ENCODE measurements at regions of chr9 and their contacts with region 1.

Region 1: DNA sequence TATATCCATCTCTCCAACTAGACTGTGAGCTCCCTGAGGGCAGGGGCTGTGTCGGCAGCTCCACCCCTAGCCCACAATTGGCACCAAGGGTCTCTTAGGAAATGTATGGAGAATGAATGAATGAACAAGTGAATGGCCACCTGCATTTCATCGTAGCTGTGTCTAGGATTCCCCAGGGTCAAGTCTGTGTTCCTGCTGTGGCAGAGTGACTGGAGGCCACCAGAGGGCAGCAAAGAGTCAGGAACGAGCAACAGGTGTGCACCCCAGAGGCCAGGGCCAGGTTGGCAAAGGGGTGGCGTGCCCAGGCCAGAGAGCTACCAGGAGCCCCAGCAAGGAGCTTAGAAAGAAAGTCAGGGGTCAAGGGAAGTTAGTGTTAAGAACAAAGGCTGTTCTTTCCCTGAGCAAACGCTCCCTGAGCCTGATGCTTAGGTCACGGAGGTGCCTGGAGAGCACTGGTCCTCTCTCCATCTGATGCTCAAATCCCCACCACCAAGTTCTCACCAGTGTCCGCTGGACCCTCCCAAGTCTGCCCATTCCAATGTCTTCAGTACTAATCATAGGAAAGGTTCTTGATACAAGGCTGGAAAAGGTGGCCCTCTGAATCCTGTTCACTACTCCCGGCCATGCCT is 160.7 kb downstream of the PAX5 start:
- DNase-seq: peak; percentile 79
- H3K4me3 ChIP-seq: no peak overlapping the region
- H3K27ac ChIP-seq: no peak overlapping the region
- H3K4me1 ChIP-seq: peaks cover 37% of the 10 kb centered on the region
- CTCF ChIP-seq: peak; percentile 95

Region 2: DNA sequence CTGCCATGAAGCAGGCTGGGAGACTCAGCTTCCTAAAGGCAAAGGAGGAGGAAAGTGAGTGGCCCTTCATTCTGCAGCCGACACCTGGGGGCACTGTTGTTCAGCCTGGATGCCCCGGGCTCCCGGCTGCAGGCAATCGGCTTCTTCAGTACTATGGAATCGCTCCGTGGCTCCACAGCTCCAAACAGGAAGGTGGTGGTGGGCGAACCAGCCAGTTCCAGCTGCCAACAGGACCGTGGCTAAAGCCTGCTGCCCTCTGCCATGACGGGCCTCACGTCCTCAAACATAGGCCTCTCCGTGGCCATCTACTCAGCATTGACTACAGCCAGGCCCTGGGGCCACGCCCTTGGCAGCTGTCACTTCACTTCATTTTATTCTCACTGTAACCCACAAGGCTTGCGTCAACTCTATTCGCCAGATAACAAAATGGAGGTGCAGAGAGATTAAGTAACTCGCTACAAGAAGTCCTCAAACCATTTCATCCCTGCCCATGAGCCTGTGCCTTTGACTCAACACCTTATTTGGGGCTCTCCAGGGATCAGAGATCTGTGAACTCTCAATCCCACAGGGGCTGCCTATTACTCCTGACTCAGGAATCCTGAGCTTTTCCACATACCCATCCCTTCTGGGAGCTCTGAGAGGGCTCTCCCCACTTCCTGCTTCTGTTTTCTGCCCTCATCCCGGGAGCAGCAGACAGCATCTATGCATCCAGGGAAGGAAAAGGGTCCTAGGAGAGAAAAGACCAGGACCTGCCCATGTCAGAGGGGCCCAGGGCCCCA is 122.8 kb after region 1 on chr9:
- CTCF ChIA-PET with region 1: interaction called, 4 read pairs
- POLR2A ChIA-PET with region 1: interaction called, 4 read pairs
- intact Hi-C with region 1: loop called (anchors 1 kb)
- DNase-seq: peak; percentile 57
- H3K4me3 ChIP-seq: peak overlapping the region; percentile 17
- H3K27ac ChIP-seq: peak overlapping the region; percentile 64
- H3K4me1 ChIP-seq: peaks cover 87% of the 10 kb centered on the region
- CTCF ChIP-seq: peak; percentile 84

Region 3: GRCh38 chr9:37187713-37188439 is 314.5 kb after region 1 on chr9:
- CTCF ChIA-PET with region 1: no interaction called
- POLR2A ChIA-PET with region 1: no interaction called
- intact Hi-C with region 1: loop called (anchors 5 kb)
- DNase-seq: peak; percentile 76
- H3K4me3 ChIP-seq: peak overlapping the region; percentile 64
- H3K27ac ChIP-seq: peak overlapping the region; percentile 90
- H3K4me1 ChIP-seq: peaks cover 72% of the 10 kb centered on the region
- CTCF ChIP-seq: no peak

Region 4: GRCh38 chr9:37364751-37365360 is 491.5 kb after region 1 on chr9:
- CTCF ChIA-PET with region 1: no interaction called
- POLR2A ChIA-PET with region 1: no interaction called
- intact Hi-C with region 1: loop called (anchors 10 kb)
- DNase-seq: peak; percentile 58
- H3K4me3 ChIP-seq: no peak overlapping the region
- H3K27ac ChIP-seq: no peak overlapping the region
- H3K4me1 ChIP-seq: peaks cover 67% of the 10 kb centered on the region
- CTCF ChIP-seq: peak; percentile 79

Region 5: DNA sequence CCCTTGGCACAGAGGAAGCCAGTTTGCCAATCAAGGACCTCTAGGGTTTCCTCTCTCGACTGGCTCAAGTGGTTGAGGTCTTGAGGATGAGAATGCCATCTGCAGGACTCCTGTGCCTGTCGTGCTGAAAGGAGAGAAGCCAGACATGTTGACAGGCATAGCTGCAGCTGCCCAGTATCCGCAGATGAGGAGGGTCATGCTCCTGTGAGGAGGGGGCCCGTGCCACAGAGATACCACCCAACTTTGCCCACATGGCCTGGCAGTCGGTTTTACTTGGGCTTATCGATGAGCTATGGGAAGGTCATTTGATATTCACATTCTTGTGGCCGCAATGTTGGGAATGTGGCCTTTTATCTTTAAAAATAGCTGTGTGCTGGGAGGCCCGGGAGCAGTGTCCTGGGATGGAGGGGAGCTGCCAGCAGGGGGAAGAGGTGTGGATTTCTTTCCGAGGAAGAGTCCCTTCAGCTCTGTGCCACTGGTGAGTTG is 794.8 kb after region 1 on chr9:
- CTCF ChIA-PET with region 1: no interaction called
- POLR2A ChIA-PET with region 1: no interaction called
- intact Hi-C with region 1: no loop called
- DNase-seq: no peak
- H3K4me3 ChIP-seq: no peak overlapping the region
- H3K27ac ChIP-seq: no peak overlapping the region
- H3K4me1 ChIP-seq: no peaks in the 10 kb centered on the region
- CTCF ChIP-seq: no peak

Measured in OCI-LY7 (cell line).